ENCODE measurements at regions of chr3 and their contacts with region 1.

Region 1: GRCh38 chr3:69665026-69665737 is 74.1 kb upstream of the MITF start:
- DNase-seq: no peak
- H3K4me3 ChIP-seq: no peak overlapping the region
- H3K27ac ChIP-seq: no peak overlapping the region
- H3K4me1 ChIP-seq: no peaks in the 10 kb centered on the region
- H3K27me3 ChIP-seq: no peaks in the 10 kb centered on the region
- CTCF ChIP-seq: no peak
- POLR2A ChIP-seq: no peak

Region 2: DNA sequence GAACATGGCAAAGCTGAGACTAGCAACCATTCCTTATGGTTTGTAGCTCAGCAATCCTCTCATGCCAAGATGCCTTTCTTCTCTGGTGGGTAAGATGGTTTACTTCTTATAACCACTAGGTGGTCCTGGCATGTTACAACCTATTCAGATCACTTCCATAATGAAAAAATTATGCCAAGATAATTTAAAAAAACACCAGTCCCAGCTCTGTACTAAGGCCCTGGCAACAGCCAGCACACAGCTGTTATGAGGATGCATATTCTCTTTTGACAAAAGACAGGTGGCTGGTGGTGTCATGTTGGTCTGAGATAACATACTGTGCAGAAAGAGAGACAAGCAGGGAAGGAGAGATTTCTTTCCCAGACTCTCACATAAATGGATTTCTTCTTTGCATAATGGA is 213.6 kb before region 1 on chr3:
- intact Hi-C with region 1: loop called (anchors 10 kb)
- DNase-seq: no peak
- H3K4me3 ChIP-seq: no peak overlapping the region
- H3K27ac ChIP-seq: no peak overlapping the region
- H3K4me1 ChIP-seq: no peaks in the 10 kb centered on the region
- H3K27me3 ChIP-seq: no peaks in the 10 kb centered on the region
- CTCF ChIP-seq: no peak
- POLR2A ChIP-seq: no peak

Measured in vagina (tissue), 2 donors.